Aorta (tissue), 5 donors: ENCODE measurements at regions of chr1 and their contacts with region 1.

Region 1: GRCh38 chr1:156492591-156493080 is 7.9 kb downstream of the MEF2D start:
- DNase-seq: peak in 1 of 2 donors; percentile 63
- ATAC-seq: no peak
- H3K4me3 ChIP-seq: no peak overlapping the region
- H3K27ac ChIP-seq: peak overlapping the region in 1 of 2 donors; percentile 15
- H3K4me1 ChIP-seq: peaks cover 7 to 18% of the 10 kb centered on the region in 2 donors
- H3K27me3 ChIP-seq: no peaks in the 10 kb centered on the region

Region 2: DNA sequence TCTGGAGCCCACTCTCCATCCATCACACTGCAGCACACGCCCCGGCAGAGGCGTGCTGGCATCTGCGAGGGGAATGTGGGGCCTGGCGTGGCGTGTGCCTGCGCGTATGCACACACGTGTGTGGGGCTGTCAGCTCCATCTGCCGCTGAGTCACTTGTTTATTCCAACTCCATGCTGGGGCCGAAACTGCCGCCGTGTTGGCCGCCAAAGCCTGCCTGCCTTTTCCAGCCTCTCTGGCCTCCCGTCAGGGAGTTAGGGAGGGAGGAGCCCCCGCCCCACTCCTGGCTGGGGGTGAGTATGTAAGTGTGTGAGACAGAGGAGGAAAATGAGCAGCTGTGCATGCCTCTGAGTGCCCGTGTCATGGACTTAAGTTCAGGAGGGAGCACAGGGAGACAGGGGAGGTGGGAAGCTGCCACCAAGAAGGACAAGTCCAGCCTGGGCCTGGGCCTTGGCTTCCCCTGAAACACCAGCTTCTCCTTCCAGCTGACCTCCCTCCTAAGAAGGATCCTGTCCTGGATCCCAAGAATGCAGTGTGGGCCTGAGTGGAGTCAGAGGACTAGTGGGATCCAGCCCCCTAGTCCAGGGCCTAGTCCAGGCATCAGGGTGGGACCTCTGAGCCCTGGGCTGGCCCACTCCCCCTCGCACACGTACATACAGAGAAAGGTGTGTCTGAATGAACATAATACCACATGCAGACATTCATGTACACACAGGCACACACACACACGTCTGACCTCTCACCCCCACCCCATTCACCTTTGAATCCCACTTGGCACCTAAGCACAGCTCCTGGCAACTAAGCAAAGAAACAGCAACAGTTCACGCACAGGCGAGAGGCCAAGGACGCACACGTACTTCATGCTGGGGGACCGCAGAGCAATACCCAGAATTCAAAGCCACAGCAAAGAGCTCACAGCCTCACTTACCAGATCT is 16.8 kb before region 1 on chr1:
- intact Hi-C with region 1: loop called in 1 of 2 experiments (anchors 2 kb)
- DNase-seq: peak; percentile 91 to 94
- ATAC-seq: peak; percentile 86
- H3K4me3 ChIP-seq: no peak overlapping the region
- H3K27ac ChIP-seq: peak overlapping the region; percentile 23 to 89
- H3K4me1 ChIP-seq: no peaks in the 10 kb centered on the region
- H3K27me3 ChIP-seq: no peaks in the 10 kb centered on the region

Region 3: DNA sequence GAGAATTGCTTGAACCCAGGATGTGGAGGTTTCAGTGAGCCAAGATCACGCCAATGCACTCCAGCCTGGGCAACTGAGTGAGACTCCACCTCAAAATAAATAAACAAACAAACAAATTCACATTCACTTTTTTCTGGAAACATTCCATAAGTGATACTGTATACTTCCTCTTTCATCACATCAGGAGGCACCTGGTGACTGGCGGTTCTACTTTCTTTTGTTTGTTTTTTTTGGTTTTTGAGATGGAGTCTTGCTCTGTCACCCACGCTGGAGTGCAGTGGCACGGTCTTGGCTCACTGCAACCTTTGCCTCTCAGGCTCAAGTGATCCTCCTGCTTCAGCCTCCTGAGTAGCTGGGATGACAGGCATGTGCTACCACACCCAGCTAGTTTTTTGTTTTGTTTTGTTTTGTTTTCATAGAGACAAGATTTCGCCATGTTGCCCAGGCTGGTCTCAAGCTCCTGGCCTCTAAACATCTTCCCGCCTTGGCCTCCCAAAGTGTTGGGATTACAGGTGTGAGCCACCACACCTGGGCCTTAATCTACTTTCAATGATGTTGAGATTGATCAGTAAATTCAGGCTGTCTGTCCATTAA is 137.3 kb after region 1 on chr1:
- intact Hi-C with region 1: no loop called
- DNase-seq: peak in 1 of 2 donors; percentile 3
- ATAC-seq: no peak
- H3K4me3 ChIP-seq: no peak overlapping the region
- H3K27ac ChIP-seq: no peak overlapping the region
- H3K4me1 ChIP-seq: no peaks in the 10 kb centered on the region
- H3K27me3 ChIP-seq: no peaks in the 10 kb centered on the region

Region 4: DNA sequence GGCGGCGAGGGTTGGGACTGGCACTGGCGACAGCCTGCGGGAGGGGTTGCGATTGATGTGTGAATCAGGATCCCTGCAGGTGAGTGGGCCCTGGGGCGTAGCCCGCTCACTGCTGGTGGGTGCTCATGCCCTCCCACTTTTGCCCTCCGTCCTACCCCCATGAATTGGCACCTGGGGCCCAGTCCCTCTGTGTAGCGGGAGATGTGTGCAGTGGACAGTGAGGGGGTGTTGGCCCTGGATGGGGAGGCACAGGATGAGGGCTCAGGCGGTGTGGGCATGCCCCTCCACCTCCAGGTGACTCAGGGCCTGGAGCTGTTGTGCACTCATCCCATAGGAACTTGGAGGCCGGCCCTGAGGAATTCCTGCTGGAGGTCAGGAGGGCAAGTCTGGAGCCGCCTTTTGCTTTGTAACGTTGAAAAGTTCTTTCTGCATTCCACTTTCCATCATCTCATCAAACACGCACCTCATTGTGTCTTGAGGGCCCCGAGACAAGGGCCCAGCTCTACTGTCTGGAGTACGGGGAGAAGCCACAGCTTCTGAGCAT is 403.9 kb after region 1 on chr1:
- intact Hi-C with region 1: no loop called
- DNase-seq: peak in 1 of 2 donors; percentile 68
- ATAC-seq: no peak
- H3K4me3 ChIP-seq: no peak overlapping the region
- H3K27ac ChIP-seq: peak overlapping the region in 1 of 2 donors; percentile 16
- H3K4me1 ChIP-seq: no peaks in the 10 kb centered on the region
- H3K27me3 ChIP-seq: no peaks in the 10 kb centered on the region